Head of caudate nucleus (tissue), 42 donors: ENCODE measurements at regions of chr17 and their contacts with region 1.

Region 1: DNA sequence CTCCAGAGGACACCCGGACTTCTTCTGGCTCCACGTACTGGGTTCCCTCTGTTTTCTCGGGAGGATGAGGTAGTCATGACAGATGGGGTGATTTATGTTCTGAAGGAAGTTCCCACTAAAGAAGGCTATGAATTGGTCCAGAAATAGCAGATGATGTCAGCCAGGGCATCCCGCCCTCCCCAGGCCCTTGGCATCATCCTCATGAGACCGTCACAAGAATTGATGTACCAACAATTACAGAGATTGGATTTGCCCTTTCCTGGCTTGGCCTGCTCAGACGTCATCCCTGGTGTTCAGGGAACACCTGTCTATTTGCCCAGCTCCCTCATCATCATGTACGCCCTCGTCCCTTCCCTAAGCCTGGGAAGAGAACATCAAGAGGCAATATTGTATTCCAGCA is 102.8 kb upstream of the CCL1 start:
- DNase-seq: no peak

Region 2: GRCh38 chr17:34423978-34424813 is 41.6 kb before region 1 on chr17:
- intact Hi-C with region 1: no loop called
- DNase-seq: no peak

Region 3: GRCh38 chr17:34533811-34534527 is 68.2 kb after region 1 on chr17:
- intact Hi-C with region 1: loop called (anchors 10 kb)
- DNase-seq: no peak